Activated CD4-positive, alpha-beta T cell treated with anti-CD3 and anti-CD28 coated beads for 36 hours (primary cell): ENCODE measurements at regions of chr10 and their contacts with region 1.

Region 1: GRCh38 chr10:73644015-73644743 is 2.9 kb upstream of the MYOZ1 start:
- DNase-seq: peak; percentile 64
- ATAC-seq: peak; percentile 78
- H3K4me3 Mint-ChIP-seq: no peak overlapping the region
- H3K27ac Mint-ChIP-seq: no peak overlapping the region
- H3K4me1 Mint-ChIP-seq: peaks cover 19% of the 10 kb centered on the region
- H3K27me3 Mint-ChIP-seq: no peaks in the 10 kb centered on the region

Region 2: DNA sequence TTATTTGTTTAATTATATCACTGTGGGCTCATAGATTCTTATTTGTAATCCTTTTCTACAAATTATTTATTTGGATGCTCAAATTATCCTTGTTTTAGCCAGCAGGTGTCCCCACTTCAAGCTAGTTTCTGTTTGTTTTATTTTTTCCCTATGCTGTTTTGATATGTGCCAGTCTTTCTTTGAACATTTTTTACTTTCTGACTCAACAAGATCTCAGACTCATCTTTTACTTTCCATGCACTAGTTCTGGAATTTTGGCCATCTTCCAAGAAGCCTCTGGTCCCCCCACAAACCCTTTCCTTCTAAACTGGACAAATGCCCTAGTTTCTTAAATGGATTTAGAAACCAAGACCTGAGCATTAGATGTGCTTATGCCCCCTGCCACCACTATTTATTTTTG is 380.2 kb before region 1 on chr10:
- CTCF ChIA-PET with region 1: interaction called, 20 read pairs
- POLR2A ChIA-PET with region 1: no interaction called
- intact Hi-C with region 1: loop called in 1 of 2 experiments (anchors 1 kb)
- DNase-seq: peak; percentile 7
- ATAC-seq: no peak
- H3K4me3 Mint-ChIP-seq: no peak overlapping the region
- H3K27ac Mint-ChIP-seq: no peak overlapping the region
- H3K4me1 Mint-ChIP-seq: peaks cover 3% of the 10 kb centered on the region
- H3K27me3 Mint-ChIP-seq: no peaks in the 10 kb centered on the region

Region 3: DNA sequence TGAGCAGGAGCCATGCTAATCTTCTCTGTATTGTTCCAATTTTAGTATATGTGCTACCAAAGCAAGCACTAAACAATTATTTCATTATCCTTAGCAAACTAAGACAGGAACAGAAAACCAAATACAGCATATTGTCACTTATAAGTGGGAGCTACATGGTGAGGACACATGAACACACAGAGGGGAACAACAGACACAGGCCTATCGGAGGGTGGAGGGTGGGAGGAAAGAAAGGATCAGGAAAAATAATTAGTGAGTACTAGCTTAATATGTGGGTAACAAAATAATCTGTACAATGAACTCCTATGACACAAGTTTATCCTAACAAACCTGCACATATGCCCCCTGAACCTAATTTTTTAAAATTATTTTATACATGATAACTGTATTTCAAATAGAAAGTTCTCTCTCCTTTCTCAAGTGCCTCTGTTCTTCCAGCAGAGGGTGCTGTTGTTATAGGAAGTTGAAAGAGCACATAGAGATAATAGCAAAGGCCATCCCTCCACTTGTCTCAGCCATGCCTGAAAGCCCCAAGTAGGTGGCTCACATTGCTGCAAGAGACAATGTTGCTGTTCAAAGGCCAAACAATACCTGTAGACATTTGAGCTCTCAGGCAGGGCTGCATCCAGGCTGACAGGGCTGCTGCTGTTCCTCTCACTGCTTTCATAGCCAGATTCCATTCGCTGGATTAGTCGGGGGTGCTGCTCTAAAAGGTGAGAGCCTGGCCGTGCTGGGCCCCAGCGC is 114.9 kb before region 1 on chr10:
- CTCF ChIA-PET with region 1: interaction called, 122 read pairs
- POLR2A ChIA-PET with region 1: interaction called, 5 read pairs
- intact Hi-C with region 1: loop called (anchors 1 kb)
- DNase-seq: peak; percentile 57
- ATAC-seq: peak; percentile 89
- H3K4me3 Mint-ChIP-seq: no peak overlapping the region
- H3K27ac Mint-ChIP-seq: no peak overlapping the region
- H3K4me1 Mint-ChIP-seq: no peaks in the 10 kb centered on the region
- H3K27me3 Mint-ChIP-seq: no peaks in the 10 kb centered on the region

Region 4: DNA sequence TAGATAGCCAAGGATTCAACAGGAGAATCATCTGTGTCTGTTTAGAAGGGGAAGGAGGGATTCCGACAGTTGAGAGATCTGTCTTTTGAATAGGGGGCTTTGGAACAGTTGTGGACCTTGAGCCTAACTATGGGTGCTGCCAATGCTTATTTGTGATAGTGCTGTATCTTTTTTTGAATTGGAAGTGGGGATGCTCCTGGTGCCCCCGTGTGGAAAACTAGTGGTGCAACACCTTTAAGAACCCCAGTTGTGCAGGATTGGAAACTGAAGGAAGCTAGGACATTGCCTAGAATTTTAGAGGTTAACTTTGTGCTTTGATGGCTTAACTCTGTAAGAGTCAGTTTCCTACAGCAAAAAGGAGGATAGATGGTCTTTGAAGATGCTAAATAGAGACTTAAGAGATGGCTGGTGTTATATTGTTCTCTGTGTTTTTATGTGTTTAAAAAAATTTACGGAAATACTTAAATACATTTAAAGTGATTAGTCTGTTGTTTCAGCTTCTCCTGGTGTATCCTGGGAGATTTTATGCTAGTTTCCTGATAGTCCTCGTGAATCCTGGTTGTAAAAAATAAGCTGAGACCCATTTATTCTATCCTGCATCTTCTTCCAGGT is 437.1 kb after region 1 on chr10:
- CTCF ChIA-PET with region 1: no interaction called
- POLR2A ChIA-PET with region 1: no interaction called
- intact Hi-C with region 1: no loop called
- DNase-seq: peak; percentile 63
- ATAC-seq: peak; percentile 37
- H3K4me3 Mint-ChIP-seq: no peak overlapping the region
- H3K27ac Mint-ChIP-seq: no peak overlapping the region
- H3K4me1 Mint-ChIP-seq: peaks cover 41% of the 10 kb centered on the region
- H3K27me3 Mint-ChIP-seq: no peaks in the 10 kb centered on the region